PC-9 (cell line): ENCODE measurements at regions of chr11 and their contacts with region 1.

Region 1: GRCh38 chr11:30346068-30346688 is 23.3 kb downstream of the ARL14EP start:
- DNase-seq: peak in 1 of 2 experiments; percentile 42
- H3K4me3 ChIP-seq: no peak overlapping the region
- H3K27ac ChIP-seq: no peak overlapping the region
- H3K4me1 ChIP-seq: no peaks in the 10 kb centered on the region
- H3K27me3 ChIP-seq: peaks cover 29% of the 10 kb centered on the region
- CTCF ChIP-seq: peak; percentile 80

Region 2: DNA sequence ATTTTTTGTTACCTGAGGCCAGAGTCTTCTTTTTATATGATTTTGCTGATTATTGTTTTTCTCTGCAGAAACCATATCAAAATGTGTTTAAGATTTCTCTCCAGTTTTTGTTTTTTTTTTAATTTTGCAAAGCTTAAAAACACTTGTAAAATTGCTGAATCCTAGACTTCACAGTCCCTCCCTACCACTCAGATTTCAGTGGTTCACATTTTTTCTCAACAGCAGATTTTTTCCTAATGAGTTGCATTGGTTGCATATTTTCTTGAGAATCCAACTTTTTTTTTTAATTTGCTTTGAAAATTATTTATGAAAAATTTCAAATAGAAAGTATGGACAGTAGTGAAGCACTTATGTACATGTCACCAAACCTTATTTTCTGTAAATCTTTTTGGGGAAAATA is 17.5 kb before region 1 on chr11:
- CTCF ChIA-PET with region 1: interaction called, 4 read pairs
- POLR2A ChIA-PET with region 1: interaction called, 33 read pairs
- intact Hi-C with region 1: no loop called
- DNase-seq: no peak
- H3K4me3 ChIP-seq: no peak overlapping the region
- H3K27ac ChIP-seq: no peak overlapping the region
- H3K4me1 ChIP-seq: peaks cover 9% of the 10 kb centered on the region
- H3K27me3 ChIP-seq: no peaks in the 10 kb centered on the region
- CTCF ChIP-seq: no peak

Region 3: DNA sequence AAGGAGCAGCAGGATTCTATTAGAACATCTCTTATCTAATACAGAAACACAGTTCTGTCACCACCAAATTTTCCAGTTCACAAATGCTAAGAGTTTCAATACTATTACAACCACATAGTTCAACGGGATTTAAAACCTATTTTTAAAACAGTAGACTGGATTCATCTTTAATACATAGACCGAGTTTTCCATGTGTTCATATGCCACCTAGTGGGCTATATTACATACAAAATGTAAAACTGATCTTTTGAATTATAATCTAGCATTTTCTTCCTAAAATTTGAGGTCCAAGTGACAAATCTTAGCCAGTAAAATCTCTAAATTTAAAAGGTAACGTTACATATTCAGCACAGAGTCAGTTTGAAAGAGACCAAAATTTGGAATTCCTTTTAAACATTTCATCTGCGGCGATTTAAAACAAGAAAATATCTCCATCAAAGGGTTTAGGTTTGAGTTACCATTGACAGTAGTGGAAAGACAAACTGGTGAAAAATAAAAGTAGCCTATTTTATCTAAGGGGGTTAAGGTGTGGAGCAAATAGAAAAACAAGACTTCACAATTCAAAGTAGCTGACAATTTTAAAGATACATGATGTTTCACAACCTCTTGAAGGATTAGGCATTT is 509.3 kb after region 1 on chr11:
- CTCF ChIA-PET with region 1: no interaction called
- POLR2A ChIA-PET with region 1: no interaction called
- intact Hi-C with region 1: loop called (anchors 2 kb)
- DNase-seq: no peak
- H3K4me3 ChIP-seq: no peak overlapping the region
- H3K27ac ChIP-seq: no peak overlapping the region
- H3K4me1 ChIP-seq: no peaks in the 10 kb centered on the region
- H3K27me3 ChIP-seq: no peaks in the 10 kb centered on the region
- CTCF ChIP-seq: peak; percentile 63

Region 4: DNA sequence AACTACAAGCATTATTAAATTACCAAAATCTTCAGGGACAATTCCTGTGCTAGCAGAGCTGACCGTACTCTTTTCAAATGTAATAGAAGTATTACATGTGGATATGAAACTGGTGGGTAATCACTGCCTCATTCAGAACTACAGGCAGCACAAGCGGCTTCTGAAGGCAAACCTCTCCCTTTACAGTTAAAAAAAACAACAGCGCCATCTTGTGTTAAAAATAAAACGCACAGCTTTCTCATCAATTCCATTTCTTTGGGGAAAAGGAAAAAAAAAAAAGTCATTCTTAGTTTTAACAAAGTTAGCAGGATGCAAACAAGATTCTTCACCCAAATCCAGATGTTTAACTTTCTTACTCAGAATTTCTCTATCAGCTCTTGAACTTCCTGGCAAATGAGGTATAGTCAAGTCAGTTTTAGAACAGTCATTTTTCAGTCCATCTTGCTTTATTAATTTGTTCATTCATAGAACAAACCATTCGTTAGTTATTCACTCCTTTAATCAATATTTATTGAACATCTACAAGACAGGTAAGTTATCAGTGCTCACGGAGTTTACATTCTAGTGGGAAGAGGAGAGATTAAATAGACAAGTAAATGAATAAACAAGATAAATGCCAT is 571.8 kb after region 1 on chr11:
- CTCF ChIA-PET with region 1: no interaction called
- POLR2A ChIA-PET with region 1: no interaction called
- intact Hi-C with region 1: loop called (anchors 1 kb)
- DNase-seq: no peak
- H3K4me3 ChIP-seq: no peak overlapping the region
- H3K27ac ChIP-seq: no peak overlapping the region
- H3K4me1 ChIP-seq: no peaks in the 10 kb centered on the region
- H3K27me3 ChIP-seq: no peaks in the 10 kb centered on the region; the same call in 1 of the 2 replicates
- CTCF ChIP-seq: peak; percentile 87